Cardiac septum (tissue), 1 donor: ENCODE measurements at regions of chr17 and their contacts with region 1.

Region 1: DNA sequence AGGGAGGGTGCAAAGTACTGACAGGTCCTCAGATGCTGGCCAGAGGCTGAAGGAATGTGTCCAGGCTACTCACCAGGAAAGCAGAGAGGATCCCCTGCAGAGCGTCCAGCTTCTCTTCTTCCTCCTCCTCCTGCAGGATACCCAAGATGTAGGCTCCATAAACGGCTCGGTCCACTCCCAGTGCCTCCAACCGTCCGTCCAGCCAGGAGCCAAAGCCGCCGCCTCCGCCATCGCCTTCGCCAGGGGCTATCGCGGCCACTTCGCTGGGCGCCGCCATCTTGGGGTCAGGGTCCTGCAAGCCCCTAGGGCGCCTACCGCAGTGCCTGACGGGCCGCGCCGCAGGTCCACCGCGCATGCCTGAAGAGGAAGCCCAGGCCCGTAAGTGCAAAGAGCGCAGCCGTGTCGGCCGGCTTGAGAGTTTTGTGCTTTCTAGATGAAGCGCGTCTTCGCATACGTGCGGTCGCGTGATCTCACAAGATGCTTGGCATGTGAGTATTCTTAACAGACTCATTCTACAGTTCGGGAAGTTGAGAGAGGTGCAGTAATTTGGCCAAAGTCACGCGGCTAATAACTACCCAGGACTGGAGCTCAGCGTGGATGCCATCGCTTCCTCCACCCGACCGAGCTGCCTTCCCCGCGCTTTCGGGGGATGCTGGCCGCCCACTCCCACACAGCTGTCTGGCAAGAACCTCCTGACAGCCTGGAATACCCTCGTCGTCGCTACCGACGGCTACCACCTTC is at the start of gene CCDC43:
- DNase-seq: peak; percentile 95
- total RNA-seq, gene CCDC43: 25.5 TPM

Region 2: GRCh38 chr17:44708401-44709181 is 18.9 kb after region 1 on chr17 and contains the start of gene DBF4B:
- intact Hi-C with region 1: loop called (anchors 2 kb)
- DNase-seq: peak; percentile 91
- total RNA-seq, gene DBF4B: 5.9 TPM